Activated T-helper 2 cell treated with anti-CD3 and anti-CD28 coated beads, Interferon-gamma antibody, Interleukin-2, Interleukin-4, amounts not matched to agents 10 μg/mL and 5 μg/mL and 100 μg/mL, durations not matched to agents 14 hours and 24 hours and 36 hours (primary cell): ENCODE measurements at regions of chr12 and their contacts with region 1.

Region 1: GRCh38 chr12:76083904-76084862 is at the start of gene NAP1L1:
- DNase-seq: peak; percentile 96
- H3K4me3 Mint-ChIP-seq: peak within 1 kb of the TSS; percentile 94
- H3K27ac Mint-ChIP-seq: peak within 1 kb of the TSS; percentile 99
- H3K4me1 Mint-ChIP-seq: peaks cover 44% of the 10 kb centered on the region
- H3K27me3 Mint-ChIP-seq: no peaks in the 10 kb centered on the region
- total RNA-seq, gene NAP1L1: 701 and 744 TPM in 2 replicates

Region 2: GRCh38 chr12:74537707-74538385 is 1546.3 kb before region 1 on chr12 and contains the start of gene ATXN7L3B:
- intact Hi-C with region 1: loop called (anchors 5 kb)
- DNase-seq: peak; percentile 94
- H3K4me3 Mint-ChIP-seq: peak within 1 kb of the TSS; percentile 94
- H3K27ac Mint-ChIP-seq: peak within 1 kb of the TSS; percentile 97
- H3K4me1 Mint-ChIP-seq: peaks cover 39% of the 10 kb centered on the region
- H3K27me3 Mint-ChIP-seq: no peaks in the 10 kb centered on the region
- total RNA-seq, gene ATXN7L3B: 23.8 and 24.3 TPM in 2 replicates

Region 3: DNA sequence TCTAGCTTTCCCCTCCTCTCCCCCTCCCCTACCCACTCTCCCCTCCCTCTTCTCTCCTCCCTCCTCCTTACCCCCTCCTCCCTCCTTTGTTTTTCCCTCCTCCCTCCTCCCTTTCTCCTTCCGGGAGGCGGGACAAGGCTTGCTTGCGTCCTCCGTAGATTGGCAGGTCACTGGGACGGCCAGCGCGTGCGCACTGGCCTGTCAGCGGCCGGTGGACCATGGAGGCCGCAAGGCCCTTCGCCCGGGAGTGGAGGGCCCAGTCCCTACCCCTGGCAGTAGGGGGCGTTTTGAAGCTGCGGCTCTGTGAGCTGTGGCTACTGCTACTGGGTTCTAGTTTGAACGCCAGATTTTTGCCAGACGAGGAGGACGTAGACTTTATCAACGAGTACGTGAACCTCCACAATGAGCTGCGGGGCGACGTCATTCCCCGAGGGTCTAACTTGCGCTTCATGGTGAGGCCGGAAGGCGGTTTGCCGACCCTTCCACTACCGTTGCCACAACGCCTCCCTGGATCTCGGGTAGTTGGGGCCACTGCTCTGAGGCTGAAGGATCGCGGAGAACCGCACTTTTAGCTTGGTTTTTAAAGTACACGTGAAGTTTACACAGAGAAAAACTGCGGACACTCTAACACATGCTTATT is 693.2 kb before region 1 on chr12 and contains the start of gene GLIPR1L2:
- intact Hi-C with region 1: loop called (anchors 2 kb)
- DNase-seq: peak; percentile 82
- H3K4me3 Mint-ChIP-seq: peak within 1 kb of the TSS; percentile 87
- H3K27ac Mint-ChIP-seq: peak within 1 kb of the TSS; percentile 86
- H3K4me1 Mint-ChIP-seq: peaks cover 27% of the 10 kb centered on the region
- H3K27me3 Mint-ChIP-seq: no peaks in the 10 kb centered on the region
- total RNA-seq, gene GLIPR1L2: not detected in 2 replicates

Region 4: GRCh38 chr12:75641031-75641780 is 443.0 kb before region 1 on chr12:
- intact Hi-C with region 1: loop called (anchors 1 kb)
- DNase-seq: peak; percentile 27
- H3K4me3 Mint-ChIP-seq: no peak overlapping the region
- H3K27ac Mint-ChIP-seq: peak overlapping the region; percentile 76
- H3K4me1 Mint-ChIP-seq: peaks cover 46% of the 10 kb centered on the region
- H3K27me3 Mint-ChIP-seq: peaks cover 12% of the 10 kb centered on the region

Region 5: GRCh38 chr12:76277480-76277879 is 193.3 kb after region 1 on chr12:
- intact Hi-C with region 1: loop called (anchors 2 kb)
- DNase-seq: no peak
- H3K4me3 Mint-ChIP-seq: no peak overlapping the region
- H3K27ac Mint-ChIP-seq: no peak overlapping the region
- H3K4me1 Mint-ChIP-seq: peaks cover 14% of the 10 kb centered on the region
- H3K27me3 Mint-ChIP-seq: peaks cover 9% of the 10 kb centered on the region

Region 6: DNA sequence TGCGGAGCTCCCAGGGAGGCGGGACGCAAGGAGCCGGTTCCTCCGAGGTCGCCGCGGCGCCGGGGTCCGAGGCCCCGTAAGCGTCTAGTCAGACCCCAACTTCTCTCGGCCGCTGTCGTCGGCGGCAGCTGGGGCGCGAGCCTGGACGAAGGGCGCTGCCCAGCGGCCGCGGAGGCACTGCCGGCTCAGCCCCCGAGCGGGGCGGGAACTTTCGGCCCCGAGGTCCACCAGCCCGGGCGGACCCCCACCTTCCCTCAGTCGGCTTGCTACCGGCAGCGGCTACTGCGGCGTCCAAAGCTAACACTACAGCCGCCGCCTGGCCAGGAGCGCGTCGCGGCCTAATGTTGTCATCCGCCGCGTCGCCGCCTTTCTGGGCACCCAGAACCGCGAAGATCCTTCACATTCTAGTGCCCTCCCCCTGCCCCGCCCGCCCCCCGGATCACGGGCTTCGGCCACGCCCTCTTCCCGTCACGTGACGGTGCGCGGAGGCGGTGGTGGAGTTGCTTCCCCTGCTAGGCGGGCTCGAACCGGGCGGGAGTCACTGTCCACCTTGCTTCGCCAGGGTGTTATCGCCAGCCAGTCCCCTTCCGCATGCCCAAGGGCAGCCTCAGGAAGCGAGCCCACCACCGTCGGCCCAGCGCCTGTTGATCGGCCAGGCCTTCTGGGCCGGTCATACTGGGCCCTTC is 475.4 kb after region 1 on chr12 and contains the start of gene OSBPL8:
- intact Hi-C with region 1: loop called (anchors 1 kb)
- DNase-seq: peak; percentile 89
- H3K4me3 Mint-ChIP-seq: peak within 1 kb of the TSS; percentile 93
- H3K27ac Mint-ChIP-seq: peak within 1 kb of the TSS; percentile 96
- H3K4me1 Mint-ChIP-seq: peaks cover 39% of the 10 kb centered on the region
- H3K27me3 Mint-ChIP-seq: no peaks in the 10 kb centered on the region
- total RNA-seq, gene OSBPL8: 87.9 TPM in 2 replicates